CD4-positive, alpha-beta memory T cell (primary cell): ENCODE measurements at regions of chr2 and their contacts with region 1.

Region 1: DNA sequence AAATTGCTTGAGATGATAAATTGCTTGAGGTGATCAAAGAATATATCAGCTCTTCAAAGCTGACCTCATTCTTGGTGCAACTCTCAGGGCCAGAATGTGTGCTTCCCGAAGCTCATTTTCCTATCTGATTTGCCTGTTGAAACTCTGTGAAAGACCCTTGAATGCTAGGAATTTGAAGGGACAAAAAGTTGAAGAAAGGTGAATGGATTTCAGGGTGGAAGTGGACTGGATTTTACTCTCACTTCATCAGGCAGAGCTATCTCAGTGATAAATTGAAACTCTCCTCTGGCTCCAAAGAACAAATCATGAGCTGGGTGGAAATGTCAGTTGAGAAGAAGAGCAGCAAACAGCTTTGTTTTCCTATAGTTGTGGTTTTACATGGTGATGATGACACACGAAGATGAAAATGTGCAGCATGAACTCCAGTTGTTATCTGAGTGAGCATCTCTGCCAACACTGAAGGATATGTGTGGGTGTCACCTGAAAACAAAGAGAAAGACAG is 34.4 kb downstream of the CD28 start:
- DNase-seq: peak; percentile 78 to 88 (median 86)
- H3K4me3 ChIP-seq: peak overlapping the region in 1 of 2 donors; percentile 28
- H3K4me3 Mint-ChIP-seq: peak overlapping the region; percentile 17 to 86 (median 70)
- H3K27ac ChIP-seq: peak overlapping the region; percentile 66
- H3K27ac Mint-ChIP-seq: peak overlapping the region; percentile 81 to 99 (median 95)
- H3K4me1 ChIP-seq: peaks cover 94% of the 10 kb centered on the region
- H3K4me1 Mint-ChIP-seq: peaks cover 65 to 90% (median 79%) of the 10 kb centered on the region in 4 donors
- H3K27me3 ChIP-seq: no peaks in the 10 kb centered on the region
- H3K27me3 Mint-ChIP-seq: no peaks in the 10 kb centered on the region

Region 2: DNA sequence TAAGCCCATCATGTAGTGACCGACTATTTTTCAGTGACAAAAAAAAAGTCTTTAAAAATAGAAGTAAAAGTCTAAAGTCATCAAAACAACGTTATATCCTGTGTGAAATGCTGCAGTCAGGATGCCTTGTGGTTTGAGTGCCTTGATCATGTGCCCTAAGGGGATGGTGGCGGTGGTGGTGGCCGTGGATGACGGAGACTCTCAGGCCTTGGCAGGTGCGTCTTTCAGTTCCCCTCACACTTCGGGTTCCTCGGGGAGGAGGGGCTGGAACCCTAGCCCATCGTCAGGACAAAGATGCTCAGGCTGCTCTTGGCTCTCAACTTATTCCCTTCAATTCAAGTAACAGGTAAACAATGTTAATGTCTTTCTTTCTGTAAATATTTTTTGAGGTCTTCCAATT is 34.4 kb before region 1 on chr2 and contains the start of gene CD28:
- CTCF ChIA-PET with region 1: interaction called, 34 read pairs
- POLR2A ChIA-PET with region 1: interaction called, 794 read pairs
- intact Hi-C with region 1: loop called (anchors 1 kb)
- DNase-seq: peak; percentile 94 to 96 (median 94)
- H3K4me3 ChIP-seq: peak within 1 kb of the TSS; percentile 78 to 90
- H3K4me3 Mint-ChIP-seq: peak within 1 kb of the TSS; percentile 86 to 99 (median 92)
- H3K27ac ChIP-seq: peak within 1 kb of the TSS; percentile 94
- H3K27ac Mint-ChIP-seq: peak within 1 kb of the TSS; percentile 93 to 100 (median 99)
- H3K4me1 ChIP-seq: peaks cover 44% of the 10 kb centered on the region
- H3K4me1 Mint-ChIP-seq: peaks cover 42 to 75% (median 55%) of the 10 kb centered on the region in 4 donors
- H3K27me3 ChIP-seq: no peaks in the 10 kb centered on the region
- H3K27me3 Mint-ChIP-seq: no peaks in the 10 kb centered on the region
- total RNA-seq, gene CD28: 203 to 222 TPM

Region 3: GRCh38 chr2:203730076-203730729 is 10.6 kb before region 1 on chr2:
- CTCF ChIA-PET with region 1: interaction called, 14 read pairs
- POLR2A ChIA-PET with region 1: interaction called, 185 read pairs
- intact Hi-C with region 1: loop called (anchors 1 kb)
- DNase-seq: no peak
- H3K4me3 ChIP-seq: no peak overlapping the region
- H3K4me3 Mint-ChIP-seq: peak overlapping the region; percentile 31 to 82 (median 70)
- H3K27ac ChIP-seq: peak overlapping the region; percentile 30
- H3K27ac Mint-ChIP-seq: peak overlapping the region; percentile 76 to 92 (median 88)
- H3K4me1 ChIP-seq: peaks cover 94% of the 10 kb centered on the region
- H3K4me1 Mint-ChIP-seq: peaks cover 76 to 95% (median 85%) of the 10 kb centered on the region in 4 donors
- H3K27me3 ChIP-seq: no peaks in the 10 kb centered on the region
- H3K27me3 Mint-ChIP-seq: no peaks in the 10 kb centered on the region

Region 4: GRCh38 chr2:203763938-203764664 is 23.3 kb after region 1 on chr2:
- CTCF ChIA-PET with region 1: interaction called, 16 read pairs
- POLR2A ChIA-PET with region 1: interaction called, 18 read pairs
- intact Hi-C with region 1: loop called (anchors 2 kb)
- DNase-seq: peak in 1 of 5 donors; percentile 15
- H3K4me3 ChIP-seq: no peak overlapping the region
- H3K4me3 Mint-ChIP-seq: peak overlapping the region in 7 of 8 donors; percentile 4 to 59 (median 44)
- H3K27ac ChIP-seq: no peak overlapping the region
- H3K27ac Mint-ChIP-seq: peak overlapping the region; percentile 61 to 87 (median 80)
- H3K4me1 ChIP-seq: peaks cover 68% of the 10 kb centered on the region
- H3K4me1 Mint-ChIP-seq: peaks cover 50 to 78% (median 66%) of the 10 kb centered on the region in 4 donors
- H3K27me3 ChIP-seq: no peaks in the 10 kb centered on the region
- H3K27me3 Mint-ChIP-seq: no peaks in the 10 kb centered on the region

Region 5: GRCh38 chr2:203804070-203804469 is 63.2 kb after region 1 on chr2:
- CTCF ChIA-PET with region 1: interaction called, 3 read pairs
- POLR2A ChIA-PET with region 1: interaction called, 15 read pairs
- intact Hi-C with region 1: no loop called
- DNase-seq: peak; percentile 36 to 57 (median 50)
- H3K4me3 ChIP-seq: no peak overlapping the region
- H3K4me3 Mint-ChIP-seq: peak overlapping the region; percentile 4 to 81 (median 70)
- H3K27ac ChIP-seq: no peak overlapping the region
- H3K27ac Mint-ChIP-seq: peak overlapping the region; percentile 25 to 95 (median 87)
- H3K4me1 ChIP-seq: peaks cover 51% of the 10 kb centered on the region
- H3K4me1 Mint-ChIP-seq: peaks cover 39 to 73% (median 62%) of the 10 kb centered on the region in 4 donors
- H3K27me3 ChIP-seq: no peaks in the 10 kb centered on the region
- H3K27me3 Mint-ChIP-seq: no peaks in the 10 kb centered on the region